PC-3 (cell line): ENCODE measurements at regions of chr3 and their contacts with region 1.

Region 1: GRCh38 chr3:4928277-4928789 is 50.9 kb upstream of the BHLHE40 start:
- DNase-seq: no peak
- ATAC-seq: no peak
- H3K4me3 ChIP-seq: no peak overlapping the region
- H3K27ac ChIP-seq: no peak overlapping the region
- H3K4me1 ChIP-seq: no peaks in the 10 kb centered on the region
- H3K27me3 ChIP-seq: no peaks in the 10 kb centered on the region
- CTCF ChIP-seq: no peak

Region 2: GRCh38 chr3:4670352-4670751 is 258.0 kb before region 1 on chr3:
- CTCF ChIA-PET with region 1: no interaction called
- POLR2A ChIA-PET with region 1: no interaction called
- intact Hi-C with region 1: no loop called
- DNase-seq: peak; percentile 57
- ATAC-seq: peak; percentile 88
- H3K4me3 ChIP-seq: no peak overlapping the region
- H3K27ac ChIP-seq: no peak overlapping the region
- H3K4me1 ChIP-seq: no peaks in the 10 kb centered on the region
- H3K27me3 ChIP-seq: no peaks in the 10 kb centered on the region
- CTCF ChIP-seq: peak; percentile 78

Region 3: DNA sequence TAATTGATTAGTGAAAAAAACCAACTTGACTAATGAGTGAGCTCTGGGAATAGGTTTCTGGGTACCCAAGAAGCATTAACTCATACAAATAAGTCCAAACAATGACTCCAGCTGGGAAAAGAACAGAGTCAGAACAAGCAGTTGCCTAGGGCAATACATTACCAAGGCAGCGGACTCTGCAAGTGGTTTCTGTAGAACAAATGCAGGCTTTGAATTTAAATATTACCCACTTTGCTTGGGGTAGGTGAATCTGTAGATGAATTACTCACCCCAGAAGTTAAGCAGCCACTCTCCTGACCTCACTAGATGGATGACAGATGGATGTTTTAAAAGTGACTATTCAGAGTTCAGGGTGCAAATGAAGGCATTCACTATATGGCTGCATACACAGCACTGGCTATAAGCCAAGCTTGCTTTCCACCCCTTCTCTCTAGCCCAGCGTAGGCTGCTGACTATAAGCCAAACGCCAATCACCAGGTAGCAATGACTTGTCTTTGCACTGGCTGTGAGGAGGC is 22.2 kb before region 1 on chr3:
- CTCF ChIA-PET with region 1: no interaction called
- POLR2A ChIA-PET with region 1: interaction called, 11 read pairs
- intact Hi-C with region 1: no loop called
- DNase-seq: peak; percentile 90
- ATAC-seq: peak; percentile 65
- H3K4me3 ChIP-seq: no peak overlapping the region
- H3K27ac ChIP-seq: peak overlapping the region; percentile 79
- H3K4me1 ChIP-seq: peaks cover 30% of the 10 kb centered on the region
- H3K27me3 ChIP-seq: no peaks in the 10 kb centered on the region
- CTCF ChIP-seq: no peak

Region 4: DNA sequence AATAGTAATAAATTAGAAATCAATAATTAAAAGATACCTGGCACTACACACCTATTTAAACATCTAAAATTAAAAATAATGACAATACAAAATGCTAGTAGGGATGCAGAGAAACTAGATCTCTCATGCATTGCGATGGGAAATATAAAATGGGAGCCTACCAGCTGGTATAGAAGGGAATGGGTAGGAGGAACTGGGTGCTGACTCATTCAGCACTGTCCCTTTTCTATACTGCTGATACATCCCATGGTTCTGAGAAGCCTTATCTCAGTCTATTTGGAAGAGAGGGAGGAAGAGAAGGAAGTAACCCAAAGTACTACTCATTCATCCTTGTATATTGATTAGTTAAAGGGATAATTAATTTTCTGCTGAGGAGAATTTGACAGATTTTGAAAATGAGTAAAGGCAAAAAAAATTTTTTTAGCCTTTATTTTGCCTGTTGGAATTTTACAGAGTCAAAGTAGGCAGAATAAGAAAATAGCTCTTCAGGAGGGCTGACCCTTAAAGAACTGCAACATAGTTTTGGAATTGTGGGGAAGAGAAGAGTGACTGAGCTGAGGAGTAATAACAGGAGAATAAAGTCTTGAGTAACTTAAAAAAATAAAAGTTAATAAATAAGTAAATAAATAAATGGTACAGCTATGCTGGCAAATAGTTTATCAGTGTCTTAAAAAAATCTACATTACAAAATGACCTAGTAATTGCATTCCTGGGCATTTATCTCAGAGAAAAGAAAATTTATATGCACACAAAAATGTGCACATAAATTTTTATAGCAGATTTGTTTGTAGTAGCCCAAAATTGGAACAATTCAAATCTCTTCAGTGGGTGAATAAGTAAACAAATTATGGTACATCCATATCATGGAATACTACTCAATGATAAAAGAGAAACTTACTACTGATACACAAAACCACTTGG is 35.6 kb after region 1 on chr3:
- CTCF ChIA-PET with region 1: no interaction called
- POLR2A ChIA-PET with region 1: no interaction called
- intact Hi-C with region 1: no loop called
- DNase-seq: no peak
- ATAC-seq: peak; percentile 87
- H3K4me3 ChIP-seq: no peak overlapping the region
- H3K27ac ChIP-seq: no peak overlapping the region
- H3K4me1 ChIP-seq: 0 out of 2 replicates have a peak, but pooled peaks cover 6% of the 10 kb centered on the region
- H3K27me3 ChIP-seq: no peaks in the 10 kb centered on the region
- CTCF ChIP-seq: no peak